Activated T-helper 2 cell treated with anti-CD3 and anti-CD28 coated beads, Interferon-gamma antibody, Interleukin-2, Interleukin-4, amounts not matched to agents 10 μg/mL and 5 μg/mL and 100 μg/mL, durations not matched to agents 14 hours and 24 hours and 36 hours (primary cell): ENCODE measurements at regions of chr11 and their contacts with region 1.

Region 1: DNA sequence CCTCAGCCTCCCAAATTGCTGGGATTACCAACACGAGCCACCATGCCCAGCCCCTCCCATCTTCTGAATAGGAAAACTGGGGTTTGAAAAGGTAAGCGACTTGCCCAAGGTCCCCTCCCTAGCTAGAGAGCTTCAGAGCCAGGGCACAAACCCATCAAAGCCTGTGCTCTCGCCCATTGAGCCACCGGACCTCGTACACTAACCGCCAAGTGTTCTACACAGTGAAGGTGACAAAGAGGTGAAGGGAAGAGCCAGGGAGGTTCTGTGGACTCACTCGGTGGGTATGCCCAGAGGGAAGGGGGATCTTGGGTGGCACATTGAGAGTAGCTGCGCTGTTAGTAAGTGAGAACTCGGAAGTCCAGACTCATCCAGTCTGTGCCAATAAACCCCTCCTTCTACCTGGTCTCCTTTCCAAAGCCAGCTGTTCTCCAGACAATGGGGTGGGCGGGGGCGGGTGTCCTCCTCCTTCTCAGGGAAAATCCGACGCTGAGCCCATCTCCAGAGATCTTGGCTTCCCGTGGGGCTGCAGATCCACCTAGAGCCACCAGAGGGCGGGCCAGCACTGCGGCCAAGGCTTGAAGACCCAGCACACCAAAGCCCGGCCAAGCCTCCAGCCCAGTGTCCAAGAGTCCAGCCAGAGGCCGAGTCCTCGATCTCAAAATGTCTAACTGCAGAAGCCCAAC is 3.2 kb upstream of the RTN4RL2 start:
- DNase-seq: peak; percentile 63
- H3K4me3 Mint-ChIP-seq: peak overlapping the region; percentile 9
- H3K27ac Mint-ChIP-seq: no peak overlapping the region
- H3K4me1 Mint-ChIP-seq: peaks cover 22% of the 10 kb centered on the region
- H3K27me3 Mint-ChIP-seq: peaks cover 49% of the 10 kb centered on the region

Region 2: DNA sequence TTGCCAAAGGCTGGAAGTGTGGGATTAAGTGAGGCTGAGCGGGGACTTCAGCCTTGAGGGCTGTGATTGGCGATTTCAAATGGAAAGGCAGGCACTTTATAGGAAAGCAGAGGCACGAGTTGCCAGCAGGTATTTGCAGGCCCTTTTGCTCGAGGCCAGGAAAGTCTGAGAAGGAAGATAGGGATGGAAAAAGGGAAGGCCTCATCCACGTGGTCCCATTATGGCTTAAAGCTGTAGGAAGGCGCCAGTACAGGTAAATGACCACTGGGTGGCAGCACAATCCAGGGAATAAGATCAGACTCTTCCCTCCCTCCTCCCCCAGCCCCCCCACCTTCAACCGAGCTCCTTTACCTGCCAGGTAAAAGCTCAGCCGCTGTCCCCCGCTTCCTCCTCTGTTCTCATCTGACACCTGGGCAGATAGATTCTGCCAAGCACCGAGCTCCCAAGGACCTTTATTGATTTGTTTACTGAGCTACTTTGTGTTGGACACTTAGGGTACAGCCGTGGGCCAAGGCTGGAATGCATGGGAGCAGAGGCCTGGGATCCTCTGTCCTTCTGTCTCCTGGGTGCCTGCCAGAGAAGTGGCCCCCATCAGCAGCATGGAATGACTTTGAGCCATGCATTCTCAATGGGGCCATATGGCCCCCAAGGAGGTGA is 111.4 kb before region 1 on chr11:
- intact Hi-C with region 1: loop called (anchors 2 kb)
- DNase-seq: no peak
- H3K4me3 Mint-ChIP-seq: no peak overlapping the region
- H3K27ac Mint-ChIP-seq: no peak overlapping the region
- H3K4me1 Mint-ChIP-seq: no peaks in the 10 kb centered on the region
- H3K27me3 Mint-ChIP-seq: peaks cover 1% of the 10 kb centered on the region

Region 3: DNA sequence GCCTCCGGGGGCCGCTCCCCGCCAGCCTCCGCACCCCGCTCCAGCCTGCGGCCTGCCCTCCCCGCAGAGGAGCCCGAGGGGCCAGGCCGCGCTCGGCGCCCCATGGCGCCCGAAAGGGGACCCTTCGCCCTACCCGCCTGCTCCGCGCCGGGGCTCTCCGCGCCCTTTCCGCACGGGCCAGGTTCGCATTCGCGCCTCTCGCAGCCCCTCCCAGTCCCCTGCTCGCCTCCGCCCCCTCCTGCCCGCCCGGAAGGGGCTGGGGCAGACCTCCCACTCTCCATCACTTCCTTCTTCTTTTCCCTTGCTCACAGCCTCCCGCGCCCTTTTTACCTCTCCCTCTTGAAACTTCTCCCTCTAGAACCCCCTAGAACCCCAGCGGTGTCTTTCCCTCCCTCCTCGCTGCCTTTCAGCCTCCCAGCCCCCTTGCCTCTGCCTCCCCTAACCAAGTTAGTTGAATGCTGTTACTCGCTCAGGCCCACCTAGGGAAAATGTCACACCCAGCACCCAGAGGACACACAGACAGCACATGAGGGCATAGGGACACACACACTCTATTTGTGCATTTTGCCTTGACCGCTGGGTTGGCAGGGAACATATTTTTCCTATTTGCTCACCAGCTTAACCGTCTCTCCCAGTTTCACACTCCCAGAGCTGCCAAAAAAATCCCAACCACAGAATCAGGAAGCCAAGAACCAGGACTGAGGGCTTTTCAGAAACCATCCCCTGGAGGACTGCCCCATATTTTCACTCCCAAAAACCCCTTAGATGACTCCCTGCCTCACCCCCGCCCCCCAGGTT is 30.0 kb before region 1 on chr11 and contains the start of gene SLC43A3:
- intact Hi-C with region 1: loop called (anchors 1 kb)
- DNase-seq: peak; percentile 66
- H3K4me3 Mint-ChIP-seq: peak within 1 kb of the TSS; percentile 91
- H3K27ac Mint-ChIP-seq: peak within 1 kb of the TSS; percentile 64
- H3K4me1 Mint-ChIP-seq: peaks cover 44% of the 10 kb centered on the region
- H3K27me3 Mint-ChIP-seq: peaks cover 3% of the 10 kb centered on the region
- total RNA-seq, gene SLC43A3: 174 and 189 TPM in 2 replicates

Region 4: GRCh38 chr11:57444362-57445121 is 12.6 kb before region 1 on chr11:
- intact Hi-C with region 1: no loop called
- DNase-seq: no peak
- H3K4me3 Mint-ChIP-seq: no peak overlapping the region
- H3K27ac Mint-ChIP-seq: no peak overlapping the region
- H3K4me1 Mint-ChIP-seq: no peaks in the 10 kb centered on the region
- H3K27me3 Mint-ChIP-seq: peaks cover 11% of the 10 kb centered on the region

Region 5: GRCh38 chr11:57480409-57481137 is 23.5 kb after region 1 on chr11:
- intact Hi-C with region 1: loop called (anchors 1 kb)
- DNase-seq: peak; percentile 61
- H3K4me3 Mint-ChIP-seq: no peak overlapping the region
- H3K27ac Mint-ChIP-seq: no peak overlapping the region
- H3K4me1 Mint-ChIP-seq: peaks cover 12% of the 10 kb centered on the region
- H3K27me3 Mint-ChIP-seq: peaks cover 53% of the 10 kb centered on the region

Region 6: GRCh38 chr11:57515332-57516060 is 58.4 kb after region 1 on chr11 and contains the start of gene SLC43A1:
- intact Hi-C with region 1: loop called (anchors 2 kb)
- DNase-seq: peak; percentile 35
- H3K4me3 Mint-ChIP-seq: peak within 1 kb of the TSS; percentile 99
- H3K27ac Mint-ChIP-seq: peak within 1 kb of the TSS; percentile 83
- H3K4me1 Mint-ChIP-seq: peaks cover 26% of the 10 kb centered on the region
- H3K27me3 Mint-ChIP-seq: no peaks in the 10 kb centered on the region
- total RNA-seq, gene SLC43A1: 27.6 and 30.9 TPM in 2 replicates

Region 7: GRCh38 chr11:57644748-57645688 is 187.9 kb after region 1 on chr11:
- intact Hi-C with region 1: loop called (anchors 2 kb)
- DNase-seq: peak; percentile 75
- H3K4me3 Mint-ChIP-seq: no peak overlapping the region
- H3K27ac Mint-ChIP-seq: no peak overlapping the region
- H3K4me1 Mint-ChIP-seq: peaks cover 48% of the 10 kb centered on the region
- H3K27me3 Mint-ChIP-seq: peaks cover 46% of the 10 kb centered on the region

Region 8: DNA sequence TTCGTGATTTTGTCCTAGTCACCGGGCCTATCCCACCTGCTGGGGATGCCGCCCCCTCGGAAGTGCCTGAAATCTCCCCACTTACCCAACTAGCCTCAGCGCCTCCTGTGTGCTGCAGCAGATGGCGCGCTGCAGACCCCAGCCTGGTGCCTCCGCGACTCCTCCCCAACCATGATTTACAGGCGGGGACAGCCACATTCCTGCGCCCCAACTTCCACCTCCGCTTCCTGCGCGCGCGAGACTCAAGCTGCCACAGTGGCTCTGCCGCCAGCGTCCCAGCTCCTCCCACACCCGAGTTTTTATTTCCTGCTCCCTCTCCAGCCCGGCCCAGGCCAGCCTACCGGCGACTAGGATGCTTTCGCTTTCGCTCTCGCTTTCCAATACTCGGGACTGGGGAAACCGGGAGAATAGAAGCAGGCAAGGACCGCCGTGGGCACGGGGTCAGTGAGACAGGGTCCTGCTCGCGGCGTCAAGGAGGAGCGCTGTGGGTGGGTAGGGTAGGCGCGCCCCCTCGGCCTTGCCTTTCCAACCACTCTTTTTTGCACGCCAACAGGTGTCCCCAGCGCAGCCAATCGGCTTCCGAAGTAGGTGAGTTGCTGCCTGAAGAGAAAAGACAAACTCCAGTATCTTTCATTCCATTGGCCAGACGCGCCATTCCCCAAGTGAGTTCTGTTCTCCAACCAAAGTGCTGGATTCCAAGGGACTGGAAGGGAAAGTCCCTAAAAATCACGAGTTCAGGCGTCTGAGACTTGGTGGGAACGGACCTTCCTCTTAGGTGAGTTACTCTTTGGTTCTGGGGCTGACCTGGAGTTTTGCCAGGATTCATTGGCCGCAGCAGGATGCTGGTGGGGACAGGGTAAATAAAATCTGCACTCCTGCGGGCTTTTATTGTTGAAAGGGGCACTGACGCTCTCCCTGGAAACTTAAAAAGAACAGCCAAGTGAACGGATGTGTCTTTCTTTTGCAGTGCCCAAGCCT is 1685.7 kb after region 1 on chr11 and contains the start of gene FAM111A:
- intact Hi-C with region 1: loop called (anchors 5 kb)
- DNase-seq: peak; percentile 87
- H3K4me3 Mint-ChIP-seq: peak within 1 kb of the TSS; percentile 94
- H3K27ac Mint-ChIP-seq: peak within 1 kb of the TSS; percentile 95
- H3K4me1 Mint-ChIP-seq: peaks cover 57% of the 10 kb centered on the region
- H3K27me3 Mint-ChIP-seq: no peaks in the 10 kb centered on the region
- total RNA-seq, gene FAM111A: 66.2 and 69.1 TPM in 2 replicates